ENCODE measurements at regions of chrX and their contacts with region 1.

Region 1: DNA sequence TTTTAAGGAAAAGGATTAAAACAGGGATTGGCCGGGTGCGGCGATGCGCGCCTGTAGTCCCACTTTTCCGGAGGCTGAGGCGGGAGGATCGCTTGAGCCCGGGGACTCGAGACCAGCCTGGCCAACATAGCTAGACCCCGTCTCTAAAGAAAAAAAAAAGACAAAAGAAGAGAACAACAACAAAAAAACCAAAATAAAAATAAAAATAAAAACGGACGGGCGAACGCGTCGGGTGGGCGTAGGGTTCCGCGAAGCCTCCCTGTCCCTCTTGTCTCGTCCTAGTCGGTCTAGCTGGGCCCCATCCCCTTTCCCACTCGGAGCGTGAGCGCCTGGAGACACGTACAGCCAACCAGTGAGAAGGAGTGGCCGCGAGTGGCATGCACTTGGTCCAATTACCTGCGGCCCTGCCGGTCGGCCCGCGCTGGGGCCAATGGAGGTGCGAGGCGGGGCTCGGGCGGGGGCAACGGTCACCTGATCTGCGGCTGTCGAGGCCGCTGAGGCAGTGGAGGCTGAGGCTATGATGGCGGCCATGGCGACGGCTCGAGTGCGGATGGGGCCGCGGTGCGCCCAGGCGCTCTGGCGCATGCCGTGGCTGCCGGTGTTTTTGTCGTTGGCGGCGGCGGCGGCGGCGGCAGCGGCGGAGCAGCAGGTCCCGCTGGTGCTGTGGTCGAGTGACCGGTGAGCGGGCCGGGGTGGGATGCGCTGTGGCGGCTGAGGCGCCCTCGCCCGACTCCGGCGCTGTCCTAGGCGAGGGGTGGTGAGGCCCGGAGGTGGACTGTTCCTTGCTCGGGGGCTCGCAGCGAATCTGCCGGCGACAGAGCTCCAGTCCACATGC is at the start of gene ATP6AP1:
- DNase-seq: peak; percentile 94
- H3K4me3 Mint-ChIP-seq: peak within 1 kb of the TSS; percentile 74
- H3K27ac Mint-ChIP-seq: peak within 1 kb of the TSS; percentile 63
- H3K4me1 Mint-ChIP-seq: peaks cover 24% of the 10 kb centered on the region
- H3K27me3 Mint-ChIP-seq: no peaks in the 10 kb centered on the region
- total RNA-seq, gene ATP6AP1: 20.3 to 21.1 TPM

Region 2: DNA sequence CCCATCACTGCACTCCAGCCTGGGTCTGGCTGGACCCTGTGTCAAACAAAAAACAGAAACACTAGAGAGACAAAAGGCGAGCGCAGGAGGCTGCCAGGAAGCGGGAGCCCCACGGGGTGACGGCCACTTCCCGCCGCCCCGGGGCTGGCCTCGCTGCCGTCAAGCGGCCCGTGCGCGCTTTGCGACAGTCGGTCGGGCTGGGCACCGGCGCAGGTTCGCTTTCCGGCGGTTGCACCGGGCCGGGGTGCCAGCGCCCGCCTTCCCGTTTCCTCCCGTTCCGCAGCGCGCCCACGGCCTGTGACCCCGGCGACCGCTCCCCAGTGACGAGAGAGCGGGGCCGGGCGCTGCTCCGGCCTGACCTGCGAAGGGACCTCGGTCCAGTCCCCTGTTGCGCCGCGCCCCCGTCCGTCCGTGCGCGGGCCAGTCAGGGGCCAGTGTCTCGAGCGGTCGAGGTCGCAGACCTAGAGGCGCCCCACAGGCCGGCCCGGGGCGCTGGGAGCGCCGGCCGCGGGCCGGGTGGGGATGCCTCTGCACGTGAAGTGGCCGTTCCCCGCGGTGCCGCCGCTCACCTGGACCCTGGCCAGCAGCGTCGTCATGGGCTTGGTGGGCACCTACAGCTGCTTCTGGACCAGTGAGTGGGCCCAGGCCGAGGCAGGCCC is 16.9 kb before region 1 on chrX and contains the start of gene TAFAZZIN:
- CTCF ChIA-PET with region 1: no interaction called
- intact Hi-C with region 1: loop called (anchors 1 kb)
- DNase-seq: peak; percentile 82
- H3K4me3 Mint-ChIP-seq: peak within 1 kb of the TSS; percentile 91
- H3K27ac Mint-ChIP-seq: peak within 1 kb of the TSS; percentile 94
- H3K4me1 Mint-ChIP-seq: peaks cover 13% of the 10 kb centered on the region
- H3K27me3 Mint-ChIP-seq: no peaks in the 10 kb centered on the region
- total RNA-seq, gene TAFAZZIN: 63.7 to 66.5 TPM